Heart left ventricle (tissue), 16 donors: ENCODE measurements at regions of chr16 and their contacts with region 1.

Region 1: GRCh38 chr16:22297114-22297878 is at the start of gene POLR3E:
- DNase-seq: peak; percentile 99 to 100 (median 99)
- ATAC-seq: peak; percentile 94 to 96 (median 96)
- H3K4me3 ChIP-seq: peak within 1 kb of the TSS; percentile 67 to 97 (median 82)
- H3K27ac ChIP-seq: peak within 1 kb of the TSS; percentile 81 to 94 (median 90)
- H3K4me1 ChIP-seq: peaks cover 0 to 33% (median 14%) of the 10 kb centered on the region in 12 donors
- H3K27me3 ChIP-seq: no peaks in the 10 kb centered on the region
- CTCF ChIP-seq: peak; percentile 91 to 99 (median 95)
- POLR2A ChIP-seq: peak in 1 of 2 donors; percentile 61
- total RNA-seq, gene POLR3E: 27.7 to 72.6 (median 31.3) TPM

Region 2: GRCh38 chr16:21952793-21953540 is 344.3 kb before region 1 on chr16 and contains the start of gene UQCRC2:
- intact Hi-C with region 1: loop called in 3 of 10 experiments (anchors 2 to 10 kb)
- DNase-seq: peak; percentile 89 to 93 (median 91)
- ATAC-seq: peak; percentile 95 to 97 (median 96)
- H3K4me3 ChIP-seq: peak within 1 kb of the TSS; percentile 52 to 97 (median 84)
- H3K27ac ChIP-seq: peak within 1 kb of the TSS; percentile 94 to 99 (median 97)
- H3K4me1 ChIP-seq: peaks cover 0 to 61% (median 40%) of the 10 kb centered on the region in 12 donors
- H3K27me3 ChIP-seq: no peaks in the 10 kb centered on the region
- CTCF ChIP-seq: no peak
- POLR2A ChIP-seq: peak; percentile 11 to 63
- total RNA-seq, gene UQCRC2: 458 to 1,082 (median 779) TPM

Region 3: DNA sequence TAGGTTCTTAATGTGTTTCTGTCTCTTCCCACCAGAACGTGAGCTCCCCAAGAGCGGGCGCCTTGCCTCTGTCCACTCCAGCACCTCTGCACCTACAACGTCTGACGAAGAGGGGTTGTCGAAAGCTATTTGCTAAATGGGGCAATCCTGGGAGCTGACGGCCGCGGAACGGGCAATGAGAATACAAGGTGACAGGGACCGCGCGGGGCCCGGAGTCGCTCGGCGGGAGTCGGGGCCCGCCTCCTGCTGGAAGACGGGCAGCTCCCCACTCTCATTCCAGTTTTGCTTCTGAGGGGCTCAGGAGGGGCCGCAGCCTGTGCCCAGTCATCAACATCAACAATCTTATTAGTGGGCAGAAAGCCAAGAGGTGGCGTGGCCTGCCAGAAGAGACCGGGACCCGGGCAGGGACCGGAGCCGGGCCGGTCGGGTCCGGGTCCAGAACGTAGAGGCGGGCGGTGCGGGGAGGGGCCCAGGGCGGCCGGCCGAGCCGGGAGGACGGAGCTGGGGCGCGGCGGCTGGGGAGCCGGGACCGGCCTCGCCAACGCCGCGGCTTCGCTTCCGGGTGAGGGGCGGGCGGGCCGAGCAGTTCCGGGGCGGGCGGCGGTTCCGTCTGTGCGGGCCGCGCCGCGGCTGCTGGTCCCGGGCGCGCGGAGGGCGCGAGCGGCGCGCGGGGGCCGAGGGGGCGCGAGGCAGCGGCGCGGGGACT is 289.6 kb before region 1 on chr16 and contains the start of gene MOSMO:
- intact Hi-C with region 1: loop called in 7 of 10 experiments (anchors 5 to 10 kb)
- DNase-seq: peak; percentile 81 to 88 (median 81)
- ATAC-seq: peak; percentile 84 to 97 (median 94)
- H3K4me3 ChIP-seq: peak within 1 kb of the TSS; percentile 55 to 100 (median 94)
- H3K27ac ChIP-seq: peak within 1 kb of the TSS; percentile 42 to 97 (median 90)
- H3K4me1 ChIP-seq: peaks cover 0 to 44% (median 25%) of the 10 kb centered on the region in 12 donors
- H3K27me3 ChIP-seq: no peaks in the 10 kb centered on the region
- CTCF ChIP-seq: peak in 3 of 12 donors; percentile 17 to 38 (median 36)
- POLR2A ChIP-seq: peak in 1 of 2 donors; percentile 56
- total RNA-seq, gene MOSMO: 8.7 to 15.0 (median 11.7) TPM

Region 4: GRCh38 chr16:22098405-22099255 is 198.7 kb before region 1 on chr16:
- intact Hi-C with region 1: loop called in 2 of 10 experiments (anchors 10 kb)
- DNase-seq: no peak
- ATAC-seq: peak in 3 of 4 donors; percentile 51 to 72 (median 67)
- H3K4me3 ChIP-seq: no peak overlapping the region
- H3K27ac ChIP-seq: no peak overlapping the region
- H3K4me1 ChIP-seq: peaks cover 0 to 3% (median 0%) of the 10 kb centered on the region in 12 donors
- H3K27me3 ChIP-seq: peaks cover 0 to 3% (median 0%) of the 10 kb centered on the region in 9 donors
- CTCF ChIP-seq: peak; percentile 40 to 70 (median 56)
- POLR2A ChIP-seq: no peak

Region 5: DNA sequence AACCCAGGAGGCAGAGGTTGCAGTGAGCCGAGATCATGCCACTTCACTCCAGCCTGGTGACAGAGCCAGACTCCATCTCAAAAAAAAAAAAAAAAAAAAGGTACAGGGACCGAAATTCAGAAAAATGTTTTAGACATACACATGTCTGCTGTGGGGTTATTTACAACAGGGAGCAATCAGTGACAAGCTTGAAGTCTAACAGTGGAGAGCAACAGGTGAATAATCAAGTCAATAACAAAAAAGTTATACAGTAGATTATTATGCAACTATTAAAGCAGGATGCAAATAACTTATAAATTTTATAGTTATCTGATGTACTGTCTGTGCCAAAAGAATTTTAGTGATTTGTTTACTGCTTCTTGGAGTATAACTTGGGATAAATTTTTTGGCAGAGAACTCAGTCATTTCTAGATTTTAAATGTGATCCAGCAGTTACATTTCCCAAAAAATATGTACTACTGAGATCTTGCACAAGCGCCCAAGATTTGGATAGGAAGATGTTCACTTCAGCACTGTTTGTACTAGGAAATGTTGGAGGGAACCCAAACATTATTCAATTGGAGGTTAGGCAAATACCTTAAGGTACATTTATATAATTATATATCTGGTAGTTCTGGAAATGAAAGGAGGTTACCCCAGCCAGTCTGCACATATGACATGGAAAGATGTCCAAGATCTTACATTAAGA is 57.1 kb before region 1 on chr16:
- intact Hi-C with region 1: loop called in 1 of 10 experiments (anchors 10 kb)
- DNase-seq: no peak
- ATAC-seq: peak in 1 of 4 donors; percentile 64
- H3K4me3 ChIP-seq: no peak overlapping the region
- H3K27ac ChIP-seq: peak overlapping the region in 4 of 12 donors; percentile 9 to 81 (median 60)
- H3K4me1 ChIP-seq: peaks cover 0 to 28% (median 6%) of the 10 kb centered on the region in 12 donors
- H3K27me3 ChIP-seq: no peaks in the 10 kb centered on the region
- CTCF ChIP-seq: no peak
- POLR2A ChIP-seq: no peak